PC-3 (cell line): ENCODE measurements at regions of chr2 and their contacts with region 1.

Region 1: GRCh38 chr2:55519938-55520885 is 694 bp downstream of the CFAP36 start:
- DNase-seq: peak; percentile 30
- ATAC-seq: peak; percentile 33
- H3K4me3 ChIP-seq: peak overlapping the region; percentile 92
- H3K27ac ChIP-seq: no peak overlapping the region
- H3K4me1 ChIP-seq: peaks cover 10% of the 10 kb centered on the region; the same call in 1 of the 2 replicates
- H3K27me3 ChIP-seq: no peaks in the 10 kb centered on the region
- CTCF ChIP-seq: no peak

Region 2: DNA sequence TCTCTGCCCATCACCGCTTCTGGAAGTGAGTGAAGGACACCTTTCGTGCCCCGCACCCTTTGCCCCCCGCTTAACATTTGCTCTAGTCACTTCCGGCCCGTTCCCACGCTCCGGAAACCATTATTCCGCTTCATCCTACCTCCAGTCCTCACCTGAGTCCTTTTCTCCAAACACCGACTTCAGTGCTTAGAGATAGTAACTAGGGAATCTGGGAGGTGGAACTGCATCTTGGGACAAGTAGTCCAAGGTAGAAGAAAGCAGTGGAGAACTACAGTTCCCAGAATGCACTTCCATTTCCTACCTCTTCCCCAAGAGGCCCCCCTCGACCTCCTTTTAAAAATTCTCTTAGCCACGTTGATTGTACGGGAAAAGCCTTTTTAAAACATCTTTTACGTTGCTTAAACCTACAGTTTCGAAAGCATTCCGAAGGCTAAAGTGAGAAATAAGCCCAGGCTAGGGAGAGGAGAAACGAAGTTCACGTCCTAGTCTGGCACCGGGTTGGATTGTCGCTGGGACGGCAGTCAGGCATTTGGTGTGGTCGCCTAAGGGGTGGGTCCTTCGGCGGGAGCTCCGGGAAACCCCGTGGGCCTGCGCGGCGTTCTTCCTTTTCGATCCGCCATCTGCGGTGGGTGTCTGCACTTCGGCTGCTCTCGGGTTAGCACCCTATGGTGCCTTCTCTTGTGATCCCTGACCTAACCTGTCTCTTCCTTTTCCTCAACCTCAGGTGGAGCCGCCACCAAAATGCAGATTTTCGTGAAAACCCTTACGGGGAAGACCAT is 287.9 kb before region 1 on chr2 and contains the starts of genes CLHC1 and RPS27A:
- CTCF ChIA-PET with region 1: no interaction called
- POLR2A ChIA-PET with region 1: no interaction called
- intact Hi-C with region 1: loop called (anchors 10 kb)
- DNase-seq: peak; percentile 96
- ATAC-seq: peak; percentile 93
- H3K4me3 ChIP-seq: peak within 1 kb of the TSS; percentile 98
- H3K27ac ChIP-seq: peak within 1 kb of the TSS; percentile 85
- H3K4me1 ChIP-seq: peaks cover 25% of the 10 kb centered on the region
- H3K27me3 ChIP-seq: no peaks in the 10 kb centered on the region
- CTCF ChIP-seq: no peak
- total RNA-seq, gene CLHC1: 1.8 and 3.9 TPM in 2 replicates
- total RNA-seq, gene RPS27A: 1,096 and 1,330 TPM in 2 replicates

Region 3: DNA sequence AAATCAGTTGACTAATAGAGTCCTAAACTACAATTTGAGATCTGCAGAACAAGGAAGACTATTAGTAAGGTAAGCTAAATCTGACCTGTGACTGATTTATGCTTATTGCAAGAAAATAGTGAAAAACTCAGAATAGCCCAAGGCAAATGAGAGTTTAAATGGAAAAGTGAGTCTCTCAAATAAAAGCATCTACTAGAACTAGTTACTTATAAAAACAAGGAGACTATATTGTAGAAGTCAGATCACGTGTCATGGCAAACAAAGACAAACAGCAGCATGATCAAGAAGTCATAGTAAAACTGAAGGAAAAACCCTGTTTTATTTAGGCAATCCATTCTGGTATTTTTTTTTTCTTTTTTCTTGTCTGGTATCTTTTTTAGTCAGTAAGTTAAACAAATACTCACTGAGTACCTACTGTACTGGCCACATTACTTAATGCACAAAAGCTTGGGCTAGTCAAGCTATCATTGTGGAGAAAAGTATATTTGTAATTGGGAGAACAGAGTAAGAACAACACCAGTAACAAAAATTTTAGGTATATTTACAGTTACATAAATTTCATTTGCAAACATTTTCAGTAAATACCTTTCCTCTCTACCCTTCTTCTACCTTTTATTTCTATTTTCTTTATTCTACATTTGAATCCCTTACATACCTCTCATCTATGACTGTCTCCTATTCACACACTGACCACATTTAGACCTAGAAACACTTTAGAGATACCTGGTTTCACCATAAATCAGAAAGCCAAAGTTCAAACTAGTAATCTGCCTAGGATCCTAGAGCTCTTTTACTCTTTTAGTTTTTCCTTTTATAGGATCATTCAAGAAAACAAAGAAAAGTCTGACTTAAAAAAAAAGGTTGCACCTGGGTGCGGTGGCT is 124.2 kb before region 1 on chr2:
- CTCF ChIA-PET with region 1: no interaction called
- POLR2A ChIA-PET with region 1: interaction called, 19 read pairs
- intact Hi-C with region 1: no loop called
- DNase-seq: no peak
- ATAC-seq: no peak
- H3K4me3 ChIP-seq: no peak overlapping the region
- H3K27ac ChIP-seq: no peak overlapping the region
- H3K4me1 ChIP-seq: peaks cover 4% of the 10 kb centered on the region; the same call in 1 of the 2 replicates
- H3K27me3 ChIP-seq: no peaks in the 10 kb centered on the region
- CTCF ChIP-seq: no peak

Region 4: DNA sequence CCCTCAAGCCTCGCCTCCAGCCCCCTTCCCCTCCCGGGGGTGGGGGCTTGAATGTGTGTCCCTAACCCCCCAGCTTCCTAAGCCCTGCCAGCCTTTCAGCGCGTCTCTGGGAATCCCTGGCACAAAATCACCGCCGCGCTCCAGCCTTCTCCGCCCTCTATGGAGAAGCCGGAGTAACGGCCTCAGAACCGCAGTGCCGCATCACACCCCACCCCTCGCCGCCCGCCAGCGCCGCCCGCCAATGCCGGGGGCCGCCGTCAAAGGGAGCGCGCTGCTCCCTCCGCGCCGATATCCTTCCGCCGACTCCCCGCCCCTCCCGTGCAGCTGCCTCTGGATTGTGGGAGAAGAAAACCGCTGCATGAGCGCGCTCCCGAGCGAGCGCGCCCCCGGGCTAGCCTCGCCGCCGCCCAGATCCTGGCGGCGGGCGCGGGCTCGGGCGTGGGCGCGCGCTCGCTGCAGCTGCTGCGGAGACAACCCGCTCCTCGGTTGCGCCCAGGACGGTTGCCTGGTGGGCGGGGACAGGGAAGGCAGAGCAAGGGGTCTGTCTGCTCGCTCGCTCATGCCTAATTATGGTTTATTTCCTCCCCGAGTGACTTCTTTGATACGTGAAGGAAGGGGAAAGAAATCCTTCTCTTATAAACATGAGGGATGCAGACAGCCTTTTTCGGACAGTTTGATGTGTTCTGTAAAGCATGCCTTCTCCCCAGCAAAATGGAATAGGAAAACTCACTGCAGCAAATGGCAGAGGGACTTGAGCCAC is 100.4 kb before region 1 on chr2 and contains the start of gene CCDC88A:
- CTCF ChIA-PET with region 1: no interaction called
- POLR2A ChIA-PET with region 1: no interaction called
- intact Hi-C with region 1: loop called (anchors 2 kb)
- DNase-seq: peak; percentile 94
- ATAC-seq: peak; percentile 91
- H3K4me3 ChIP-seq: peak within 1 kb of the TSS; percentile 82
- H3K27ac ChIP-seq: no peak within 1 kb of the TSS
- H3K4me1 ChIP-seq: peaks cover 23% of the 10 kb centered on the region
- H3K27me3 ChIP-seq: no peaks in the 10 kb centered on the region
- CTCF ChIP-seq: 0 out of 2 replicates have a peak, but pooled peaks have one; percentile 16
- total RNA-seq, gene CCDC88A: 21.6 and 28.7 TPM in 2 replicates

Region 5: GRCh38 chr2:55617175-55618024 is 97.2 kb after region 1 on chr2 and contains the start of gene PPP4R3B:
- CTCF ChIA-PET with region 1: no interaction called
- POLR2A ChIA-PET with region 1: interaction called, 4 read pairs
- intact Hi-C with region 1: loop called (anchors 1 kb)
- DNase-seq: peak; percentile 99
- ATAC-seq: peak; percentile 78
- H3K4me3 ChIP-seq: peak within 1 kb of the TSS; percentile 94
- H3K27ac ChIP-seq: peak within 1 kb of the TSS; percentile 91
- H3K4me1 ChIP-seq: peaks cover 24% of the 10 kb centered on the region
- H3K27me3 ChIP-seq: no peaks in the 10 kb centered on the region
- CTCF ChIP-seq: peak; percentile 18; the same call in 1 of the 2 replicates
- total RNA-seq, gene PPP4R3B: 38.4 and 50.7 TPM in 2 replicates